A673 (cell line): ENCODE measurements at regions of chr16 and their contacts with region 1.

Region 1: GRCh38 chr16:28218104-28218503 is 6.3 kb upstream of the XPO6 start:
- DNase-seq: peak; percentile 80
- H3K4me3 ChIP-seq: no peak overlapping the region
- H3K27ac ChIP-seq: no peak overlapping the region
- H3K4me1 ChIP-seq: no peaks in the 10 kb centered on the region
- H3K27me3 ChIP-seq: no peaks in the 10 kb centered on the region
- CTCF ChIP-seq: peak; percentile 68

Region 2: DNA sequence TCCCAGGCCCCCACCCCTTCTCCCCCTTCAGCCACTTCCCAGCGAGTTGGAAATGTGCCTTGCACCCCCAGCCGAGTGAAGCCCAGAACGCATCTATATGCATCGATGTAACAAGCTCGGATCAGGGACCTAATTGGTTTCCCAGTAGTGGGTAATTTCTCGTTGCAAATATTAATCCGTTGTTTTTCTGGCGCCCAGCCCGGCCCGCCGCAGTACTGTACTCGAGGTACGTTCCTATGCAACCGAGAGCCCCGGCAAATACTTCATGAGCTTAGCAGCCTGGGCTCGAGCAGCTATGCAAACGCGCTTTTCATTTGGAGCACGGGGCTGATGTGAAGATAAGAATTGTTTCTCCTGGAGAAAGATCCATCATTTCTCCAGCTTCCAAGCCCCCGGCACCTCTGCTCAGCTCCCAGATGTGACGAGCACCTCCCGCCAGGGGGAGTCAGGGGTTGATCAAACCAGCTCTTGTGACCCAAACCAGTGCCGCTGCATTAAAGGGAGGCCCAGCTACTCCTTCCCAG is 438.4 kb before region 1 on chr16:
- CTCF ChIA-PET with region 1: interaction called, 10 read pairs
- POLR2A ChIA-PET with region 1: no interaction called
- intact Hi-C with region 1: no loop called
- DNase-seq: peak; percentile 70
- H3K4me3 ChIP-seq: no peak overlapping the region
- H3K27ac ChIP-seq: no peak overlapping the region
- H3K4me1 ChIP-seq: peaks cover 11% of the 10 kb centered on the region
- H3K27me3 ChIP-seq: no peaks in the 10 kb centered on the region
- CTCF ChIP-seq: peak; percentile 65

Region 3: DNA sequence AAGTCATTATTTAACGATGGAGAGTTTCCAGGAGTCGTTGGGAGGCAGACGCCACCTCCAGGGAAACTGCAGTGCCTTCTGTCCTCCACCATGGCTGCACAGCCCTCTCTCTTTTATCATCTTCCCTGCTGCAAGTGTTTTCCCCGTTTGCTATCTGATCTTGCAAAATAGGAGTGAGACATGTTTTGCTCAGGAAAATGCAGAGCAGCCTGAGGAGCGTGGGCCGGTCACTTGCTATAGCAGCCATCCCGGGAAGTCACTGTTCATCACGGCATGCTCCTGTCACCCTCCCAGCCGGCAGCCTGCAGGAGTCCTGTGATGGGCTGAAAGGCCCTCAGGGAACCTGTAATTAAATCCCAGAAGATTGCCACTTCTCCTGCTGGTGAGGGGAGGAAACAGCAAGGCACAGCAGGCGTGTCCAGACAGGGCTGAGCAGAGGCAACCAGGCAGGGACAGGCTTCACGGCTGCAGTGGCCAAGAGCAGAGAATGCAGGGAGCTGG is 297.7 kb before region 1 on chr16:
- CTCF ChIA-PET with region 1: no interaction called
- POLR2A ChIA-PET with region 1: no interaction called
- intact Hi-C with region 1: no loop called
- DNase-seq: peak; percentile 45
- H3K4me3 ChIP-seq: no peak overlapping the region
- H3K27ac ChIP-seq: no peak overlapping the region
- H3K4me1 ChIP-seq: no peaks in the 10 kb centered on the region
- H3K27me3 ChIP-seq: peaks cover 24% of the 10 kb centered on the region
- CTCF ChIP-seq: peak; percentile 38

Region 4: GRCh38 chr16:27972500-27972899 is 245.6 kb before region 1 on chr16:
- CTCF ChIA-PET with region 1: interaction called, 3 read pairs
- POLR2A ChIA-PET with region 1: no interaction called
- intact Hi-C with region 1: loop called (anchors 5 kb)
- DNase-seq: peak; percentile 57
- H3K4me3 ChIP-seq: no peak overlapping the region
- H3K27ac ChIP-seq: no peak overlapping the region
- H3K4me1 ChIP-seq: no peaks in the 10 kb centered on the region
- H3K27me3 ChIP-seq: no peaks in the 10 kb centered on the region
- CTCF ChIP-seq: peak; percentile 73

Region 5: DNA sequence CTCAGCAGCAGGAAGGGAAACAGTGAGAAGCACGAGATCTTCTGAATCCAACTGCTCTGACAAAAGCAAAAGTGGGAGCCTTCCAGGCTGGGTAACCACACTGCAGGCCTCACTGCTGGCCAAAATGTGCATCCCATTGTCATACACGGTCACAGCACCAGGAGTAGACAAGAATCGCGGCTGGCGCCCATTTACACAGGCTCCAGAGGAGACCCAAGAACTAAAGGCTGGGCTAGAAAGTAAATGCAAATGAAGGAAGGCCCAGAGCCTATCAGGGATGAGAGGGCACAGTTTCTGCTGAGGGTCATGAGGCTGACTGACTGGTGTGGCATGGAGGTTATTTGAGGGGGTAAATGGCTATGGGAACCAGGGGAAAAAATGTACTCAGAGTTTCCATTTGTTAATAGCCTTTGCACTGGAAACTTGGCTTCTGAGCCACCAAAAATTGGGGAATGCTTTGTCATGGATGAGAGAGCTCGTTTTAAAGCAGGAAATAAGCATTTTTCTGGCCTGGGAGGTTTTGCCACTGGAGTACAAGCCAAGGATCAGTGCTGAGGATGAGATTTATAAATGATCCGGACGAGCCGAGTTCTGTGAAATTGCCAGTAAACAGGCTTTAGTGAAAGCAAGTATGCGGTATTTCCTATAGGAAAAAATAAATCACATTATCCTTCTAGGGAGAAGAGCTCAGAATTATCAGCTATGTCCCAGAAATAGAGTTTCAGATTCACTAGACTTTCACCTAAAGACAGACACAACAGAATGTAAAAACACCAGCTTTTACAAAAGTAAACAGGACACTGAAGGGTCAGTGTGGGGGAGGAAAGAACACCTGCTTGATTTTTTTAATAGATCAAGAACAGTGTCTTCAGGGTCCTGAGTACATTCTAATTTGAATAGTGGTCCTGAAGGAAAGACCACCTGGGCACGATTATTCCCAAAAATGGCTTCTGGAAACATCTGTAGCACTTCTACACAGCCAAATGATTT is 87.7 kb before region 1 on chr16:
- CTCF ChIA-PET with region 1: no interaction called
- POLR2A ChIA-PET with region 1: no interaction called
- intact Hi-C with region 1: no loop called
- DNase-seq: no peak
- H3K4me3 ChIP-seq: no peak overlapping the region
- H3K27ac ChIP-seq: peak overlapping the region; percentile 48
- H3K4me1 ChIP-seq: peaks cover 4% of the 10 kb centered on the region
- H3K27me3 ChIP-seq: no peaks in the 10 kb centered on the region
- CTCF ChIP-seq: no peak

Region 6: DNA sequence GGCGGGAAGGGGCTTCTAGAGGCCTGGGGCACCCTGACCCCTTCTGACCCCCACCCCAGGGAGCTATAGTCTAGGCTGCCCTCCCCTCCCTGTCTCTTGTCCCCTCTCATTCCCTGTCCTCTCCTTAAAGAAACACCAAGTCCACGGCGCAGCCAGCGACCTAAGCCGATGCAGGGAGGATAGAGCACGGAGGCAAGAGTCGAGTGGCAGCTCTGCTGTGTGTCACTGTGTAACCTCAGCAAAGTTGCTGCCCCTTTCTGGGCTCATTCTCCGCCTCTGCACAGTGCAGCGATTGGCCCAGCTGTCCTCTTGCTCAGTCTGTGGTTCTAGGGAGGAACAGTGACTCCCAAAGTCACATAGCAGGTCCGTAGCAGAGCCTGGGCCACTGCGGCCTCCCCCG is 37.7 kb after region 1 on chr16:
- CTCF ChIA-PET with region 1: interaction called, 17 read pairs
- POLR2A ChIA-PET with region 1: no interaction called
- intact Hi-C with region 1: no loop called
- DNase-seq: no peak
- H3K4me3 ChIP-seq: no peak overlapping the region
- H3K27ac ChIP-seq: no peak overlapping the region
- H3K4me1 ChIP-seq: no peaks in the 10 kb centered on the region
- H3K27me3 ChIP-seq: no peaks in the 10 kb centered on the region
- CTCF ChIP-seq: no peak

Region 7: DNA sequence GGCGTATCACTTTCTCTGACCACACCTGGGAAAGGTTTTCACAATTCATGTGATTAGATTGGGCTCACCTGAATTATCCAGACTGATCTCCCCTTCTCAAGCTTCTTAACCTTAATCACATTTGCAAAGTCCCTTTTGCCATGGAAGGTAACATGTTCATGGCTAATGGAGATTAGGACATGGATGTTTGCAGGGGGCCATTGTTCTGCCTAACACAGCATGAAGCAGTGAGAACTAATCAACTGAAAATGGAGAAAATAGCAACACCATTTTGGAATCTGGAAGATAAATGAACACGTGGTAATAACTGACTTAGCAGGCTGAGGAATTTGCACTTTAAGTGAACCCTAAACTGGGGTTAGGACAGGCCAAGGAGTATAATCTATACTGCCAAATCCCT is 49.3 kb after region 1 on chr16:
- CTCF ChIA-PET with region 1: no interaction called
- POLR2A ChIA-PET with region 1: no interaction called
- intact Hi-C with region 1: no loop called
- DNase-seq: no peak
- H3K4me3 ChIP-seq: no peak overlapping the region
- H3K27ac ChIP-seq: no peak overlapping the region
- H3K4me1 ChIP-seq: no peaks in the 10 kb centered on the region
- H3K27me3 ChIP-seq: no peaks in the 10 kb centered on the region
- CTCF ChIP-seq: no peak